Activated B cell treated with CpG ODN at 0.5 μM for 24 hours (primary cell): ENCODE measurements at regions of chr7 and their contacts with region 1.

Region 1: DNA sequence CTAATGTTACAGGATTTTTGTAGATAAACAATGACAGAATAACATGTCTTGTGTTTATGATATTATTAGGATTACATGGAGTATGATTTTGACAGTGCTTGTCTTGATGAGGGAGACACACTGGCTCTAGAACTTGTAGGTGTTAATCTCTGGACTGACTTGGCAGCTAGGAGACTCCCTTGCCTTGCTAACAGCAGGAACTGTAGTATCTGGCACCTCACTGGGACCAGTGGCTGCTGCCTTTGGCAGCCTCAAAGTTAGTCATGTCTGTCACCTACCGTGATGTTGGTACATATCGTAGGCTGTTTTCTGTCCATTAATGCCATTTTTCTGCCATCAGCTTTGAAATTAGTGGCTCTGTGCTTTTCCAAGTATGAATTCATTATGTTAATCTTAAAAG is 261.5 kb downstream of the CDK14 start:
- DNase-seq: no peak
- ATAC-seq: no peak
- H3K4me3 Mint-ChIP-seq: no peak overlapping the region
- H3K27ac Mint-ChIP-seq: no peak overlapping the region
- H3K4me1 Mint-ChIP-seq: peaks cover 13% of the 10 kb centered on the region
- H3K27me3 Mint-ChIP-seq: no peaks in the 10 kb centered on the region
- CTCF ChIP-seq: no peak

Region 2: GRCh38 chr7:90846192-90846591 is 11.4 kb before region 1 on chr7:
- CTCF ChIA-PET with region 1: no interaction called
- POLR2A ChIA-PET with region 1: no interaction called
- intact Hi-C with region 1: loop called (anchors 2 kb)
- DNase-seq: no peak
- ATAC-seq: no peak
- H3K4me3 Mint-ChIP-seq: no peak overlapping the region
- H3K27ac Mint-ChIP-seq: no peak overlapping the region
- H3K4me1 Mint-ChIP-seq: peaks cover 39% of the 10 kb centered on the region
- H3K27me3 Mint-ChIP-seq: no peaks in the 10 kb centered on the region
- CTCF ChIP-seq: no peak

Region 3: DNA sequence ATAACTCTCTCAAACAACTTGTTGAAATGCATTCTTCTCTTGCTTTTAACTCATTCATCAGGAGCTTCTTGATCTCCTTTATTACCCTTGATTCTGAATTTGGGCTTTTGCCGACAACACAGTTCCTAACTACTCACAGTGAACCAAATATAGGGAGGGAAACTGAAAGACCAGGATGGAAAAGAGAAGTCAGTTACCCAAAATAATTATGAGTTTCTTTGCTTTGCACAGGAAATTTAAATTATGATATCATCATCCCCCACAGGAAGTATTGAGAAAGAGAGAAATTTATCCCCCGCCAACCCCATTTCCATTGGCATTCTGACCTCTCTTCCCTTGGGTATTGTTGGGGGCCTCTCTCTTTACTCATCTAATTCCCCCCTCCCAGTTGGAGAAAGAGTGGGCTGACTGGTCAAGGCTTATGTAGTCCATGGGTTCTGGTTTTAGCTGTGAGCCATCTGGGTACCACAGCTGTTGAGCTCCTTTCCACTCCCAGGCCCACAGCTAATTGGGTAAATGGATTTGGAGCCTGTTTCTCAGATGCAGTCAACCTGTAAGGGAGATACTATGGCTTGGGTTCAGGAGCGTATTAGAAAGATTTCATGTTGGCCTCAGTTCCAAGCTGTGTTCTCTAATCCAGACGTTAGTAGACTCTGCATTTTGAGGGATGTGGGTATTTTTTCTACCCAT is 515.7 kb after region 1 on chr7:
- CTCF ChIA-PET with region 1: no interaction called
- POLR2A ChIA-PET with region 1: no interaction called
- intact Hi-C with region 1: no loop called
- DNase-seq: no peak
- ATAC-seq: no peak
- H3K4me3 Mint-ChIP-seq: no peak overlapping the region
- H3K27ac Mint-ChIP-seq: no peak overlapping the region
- H3K4me1 Mint-ChIP-seq: peaks cover 5% of the 10 kb centered on the region
- H3K27me3 Mint-ChIP-seq: peaks cover 13% of the 10 kb centered on the region
- CTCF ChIP-seq: no peak